Heart right ventricle (tissue), 16 donors: ENCODE measurements at regions of chr21 and their contacts with region 1.

Region 1: DNA sequence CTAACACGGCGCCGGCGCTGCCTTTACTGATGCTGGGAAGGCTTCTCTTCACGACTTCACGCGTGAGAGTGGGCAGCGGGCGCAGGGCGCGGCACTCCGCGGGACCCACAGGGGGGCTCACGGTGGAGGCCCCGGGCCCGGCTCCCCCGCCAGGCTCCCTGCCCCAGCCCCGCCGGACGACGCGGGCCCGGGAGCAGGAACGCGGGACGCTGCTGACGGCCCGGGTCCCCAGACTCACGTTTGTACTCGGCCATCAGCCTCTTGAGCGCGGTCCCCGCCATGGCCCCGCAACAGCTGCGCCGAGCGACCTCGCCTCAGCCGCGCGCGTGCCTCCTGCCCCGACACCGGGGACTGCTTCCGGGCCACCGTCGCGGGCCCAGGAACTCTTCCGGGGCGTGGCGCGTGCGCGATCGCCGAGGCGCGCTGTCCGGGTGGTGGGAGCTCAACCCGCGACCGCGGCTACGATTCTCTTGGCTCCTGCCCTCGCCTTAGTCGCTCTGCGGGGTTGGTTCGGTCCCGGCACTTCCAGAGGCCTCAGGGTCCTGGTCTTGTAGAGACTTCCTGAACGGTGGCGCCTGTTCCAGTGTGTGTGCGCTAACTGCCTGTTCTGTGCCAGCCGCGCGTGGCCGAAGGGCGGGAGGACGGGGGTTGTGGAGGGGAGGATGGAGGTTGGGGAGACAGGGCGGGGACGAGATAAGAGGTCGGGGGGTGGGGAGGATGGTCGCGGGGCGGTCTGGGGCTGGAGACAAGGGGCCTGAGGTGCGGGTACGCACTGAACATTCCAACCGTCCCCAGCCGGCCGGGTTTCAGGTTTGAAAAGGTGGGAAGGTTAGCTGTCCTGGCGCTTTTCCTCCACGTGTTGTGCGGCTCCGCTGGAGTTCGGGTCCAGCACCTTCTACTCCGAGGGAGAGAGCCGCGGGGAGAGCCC is at the start of gene UBE2G2:
- DNase-seq: peak; percentile 77 to 87
- ATAC-seq: peak; percentile 96 to 98 (median 97)
- H3K4me3 ChIP-seq: peak within 1 kb of the TSS; percentile 69 to 98 (median 85)
- H3K27ac ChIP-seq: peak within 1 kb of the TSS in 9 of 10 donors; percentile 61 to 86 (median 79)
- H3K4me1 ChIP-seq: peaks cover 3 to 46% (median 30%) of the 10 kb centered on the region in 9 donors
- H3K27me3 ChIP-seq: no peaks in the 10 kb centered on the region
- CTCF ChIP-seq: no peak
- total RNA-seq, gene UBE2G2: 58.1 to 89.5 (median 67.0) TPM

Region 2: DNA sequence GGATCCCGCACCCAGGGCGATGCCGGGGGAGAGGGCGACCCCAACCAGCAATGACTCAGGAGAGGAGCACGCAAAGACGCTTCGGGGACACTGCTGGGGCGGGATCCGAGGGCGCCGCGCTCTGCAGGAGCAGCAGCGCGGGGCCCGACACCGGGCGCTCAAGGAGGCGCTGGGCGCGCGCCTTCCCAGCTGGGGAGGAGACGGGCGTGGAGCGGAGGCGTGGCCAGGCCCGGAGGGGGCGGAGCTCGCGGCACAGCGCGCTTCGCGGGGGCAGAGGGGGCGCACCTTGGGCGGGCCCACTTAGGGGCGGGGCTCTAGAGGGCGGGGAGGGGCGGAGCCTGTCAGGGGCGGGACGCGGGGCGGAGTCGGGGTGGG is 15.8 kb after region 1 on chr21:
- intact Hi-C with region 1: loop called in 1 of 10 experiments (anchors 2 kb)
- DNase-seq: peak; percentile 92 to 96
- ATAC-seq: peak; percentile 91 to 97 (median 95)
- H3K4me3 ChIP-seq: peak overlapping the region; percentile 52 to 97 (median 82)
- H3K27ac ChIP-seq: peak overlapping the region; percentile 37 to 99 (median 96)
- H3K4me1 ChIP-seq: peaks cover 9 to 44% (median 25%) of the 10 kb centered on the region in 9 donors
- H3K27me3 ChIP-seq: no peaks in the 10 kb centered on the region
- CTCF ChIP-seq: peak in 1 of 9 donors; percentile 13

Region 3: DNA sequence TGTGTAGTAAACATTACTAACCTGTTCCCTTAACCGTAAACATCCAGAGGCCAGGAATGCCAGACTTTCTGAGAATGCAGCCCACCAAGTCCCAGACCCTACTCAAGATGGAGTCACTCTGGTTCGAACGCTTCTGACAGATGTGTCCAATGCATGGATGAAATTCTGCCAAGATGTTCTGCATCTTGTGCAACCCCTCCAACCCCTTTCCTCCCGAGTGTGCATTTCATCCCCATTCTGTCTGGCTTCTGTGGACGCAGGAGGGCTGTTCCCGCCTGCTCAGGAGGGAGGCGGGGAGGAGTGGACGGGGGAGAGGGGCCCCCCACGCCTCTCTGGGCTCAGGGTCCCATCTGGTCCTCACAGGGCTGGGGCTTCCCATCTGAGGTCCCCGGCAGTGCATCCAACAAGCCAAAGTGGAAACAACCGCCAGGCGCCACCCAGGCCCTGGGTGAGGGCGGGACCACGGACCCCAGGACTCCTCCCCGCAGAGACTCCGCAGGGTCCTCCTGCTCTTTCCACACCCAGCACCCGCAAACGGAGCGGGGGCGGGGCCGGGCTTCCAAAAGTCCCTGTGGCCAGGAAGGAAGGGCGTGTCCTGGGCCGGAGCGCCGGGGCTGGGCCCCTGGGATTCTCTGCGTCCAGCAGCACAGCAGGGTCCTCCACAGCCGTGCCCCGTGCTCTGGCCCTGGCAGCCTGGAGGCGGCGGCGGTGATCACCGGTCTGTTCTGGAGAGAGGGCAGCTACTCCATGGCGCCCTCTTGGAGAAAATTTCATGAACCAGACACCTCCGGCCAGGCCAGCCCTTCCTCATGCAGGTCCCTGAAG is 43.9 kb after region 1 on chr21:
- intact Hi-C with region 1: loop called in 1 of 10 experiments (anchors 5 kb)
- DNase-seq: peak; percentile 67 to 81
- ATAC-seq: peak; percentile 72 to 87 (median 80)
- H3K4me3 ChIP-seq: peak overlapping the region in 9 of 10 donors; percentile 5 to 52 (median 45)
- H3K27ac ChIP-seq: peak overlapping the region in 7 of 10 donors; percentile 4 to 71 (median 55)
- H3K4me1 ChIP-seq: peaks cover 15 to 46% (median 26%) of the 10 kb centered on the region in 9 donors
- H3K27me3 ChIP-seq: no peaks in the 10 kb centered on the region
- CTCF ChIP-seq: peak in 5 of 9 donors; percentile 36 to 57 (median 52)

Region 4: GRCh38 chr21:44932408-44933181 is 130.9 kb after region 1 on chr21:
- intact Hi-C with region 1: loop called in 7 of 10 experiments (anchors 5 to 10 kb)
- DNase-seq: peak in 1 of 2 donors; percentile 65
- ATAC-seq: peak; percentile 34 to 72 (median 54)
- H3K4me3 ChIP-seq: peak overlapping the region; percentile 23 to 60 (median 46)
- H3K27ac ChIP-seq: peak overlapping the region in 3 of 10 donors; percentile 15 to 96 (median 26)
- H3K4me1 ChIP-seq: peaks cover 12 to 55% (median 25%) of the 10 kb centered on the region in 9 donors
- H3K27me3 ChIP-seq: peaks cover 13 to 71% (median 40%) of the 10 kb centered on the region in 7 donors
- CTCF ChIP-seq: peak; percentile 36 to 76 (median 62)

Region 5: DNA sequence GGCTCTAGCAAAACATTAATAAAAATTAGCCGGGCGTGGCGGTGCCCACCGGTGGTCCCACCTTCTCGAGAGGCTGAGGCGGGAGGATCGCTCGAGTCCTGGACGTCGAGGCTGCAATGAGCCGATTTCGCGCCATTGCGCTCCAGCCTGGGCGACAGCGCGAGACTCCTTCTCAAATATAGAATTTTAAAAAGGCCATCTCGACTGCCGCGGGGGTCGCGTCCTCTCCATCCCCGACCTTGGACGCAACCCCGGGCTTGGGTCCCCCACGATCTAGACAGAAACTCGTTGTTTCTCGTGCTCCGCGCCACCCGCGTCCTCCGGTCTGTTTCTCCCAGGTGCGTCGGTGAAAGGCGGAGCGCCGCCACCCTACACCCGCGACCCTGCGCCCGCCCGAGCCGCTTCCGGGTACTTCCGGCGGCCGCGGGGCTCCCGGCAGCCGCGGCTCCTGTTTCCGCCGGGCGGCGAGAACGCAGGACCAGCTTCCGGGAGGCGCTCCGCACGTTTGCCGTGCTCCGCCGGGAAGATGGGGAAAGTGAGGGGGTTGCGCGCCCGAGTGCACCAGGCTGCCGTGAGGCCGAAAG is 137.9 kb after region 1 on chr21 and contains the start of gene SLX9:
- intact Hi-C with region 1: loop called in 7 of 10 experiments (anchors 5 to 10 kb)
- DNase-seq: peak; percentile 66 to 83
- ATAC-seq: peak; percentile 82 to 95 (median 88)
- H3K4me3 ChIP-seq: peak within 1 kb of the TSS; percentile 75 to 97 (median 87)
- H3K27ac ChIP-seq: peak within 1 kb of the TSS in 9 of 10 donors; percentile 70 to 88 (median 80)
- H3K4me1 ChIP-seq: peaks cover 3 to 41% (median 30%) of the 10 kb centered on the region in 9 donors
- H3K27me3 ChIP-seq: peaks cover 0 to 6% (median 0%) of the 10 kb centered on the region in 7 donors
- CTCF ChIP-seq: peak in 1 of 9 donors; percentile 4
- total RNA-seq, gene SLX9: 42.4 to 67.2 (median 52.6) TPM

Region 6: DNA sequence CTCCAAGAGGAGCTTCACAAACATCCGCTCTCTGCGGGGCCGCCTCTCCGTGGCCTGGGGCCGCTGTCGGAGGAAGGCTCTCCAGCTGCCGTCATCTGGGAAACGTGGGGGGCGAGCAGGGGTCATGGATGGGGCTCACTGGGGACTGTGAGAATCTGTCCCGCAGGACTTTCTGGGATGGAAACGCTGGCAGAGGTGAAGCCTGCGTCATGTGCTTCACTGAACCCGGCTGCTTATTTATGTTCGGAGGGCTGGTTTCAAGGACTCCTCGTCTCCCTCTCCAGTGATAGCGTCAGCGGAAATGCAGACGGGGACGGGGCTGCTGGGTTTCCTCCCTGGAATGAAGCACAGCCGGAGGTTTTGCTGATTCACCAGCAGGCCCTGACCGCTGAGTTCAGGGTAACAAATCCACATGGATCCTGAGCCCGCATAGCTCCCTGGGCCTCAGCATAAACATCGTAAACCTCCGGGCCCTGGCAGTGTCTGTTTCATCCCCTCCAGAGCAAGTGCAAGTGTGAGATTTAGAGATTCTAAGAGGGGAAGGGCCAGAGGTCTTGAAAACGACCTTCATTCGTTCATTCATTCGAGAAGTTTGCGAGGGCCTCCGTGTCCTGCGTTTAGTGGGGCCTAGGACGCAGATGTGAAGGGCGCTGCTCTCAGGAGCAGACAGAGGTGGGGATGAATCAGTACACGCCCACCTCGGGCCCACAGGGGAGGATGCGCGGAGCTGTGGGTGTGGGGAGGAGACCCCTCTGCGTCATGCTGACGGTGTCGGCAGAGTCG is 493.0 kb after region 1 on chr21:
- intact Hi-C with region 1: no loop called
- DNase-seq: peak; percentile 89 to 92
- ATAC-seq: peak; percentile 55 to 87 (median 79)
- H3K4me3 ChIP-seq: peak overlapping the region in 3 of 10 donors; percentile 0 to 21 (median 18)
- H3K27ac ChIP-seq: peak overlapping the region; percentile 84 to 97 (median 94)
- H3K4me1 ChIP-seq: peaks cover 26 to 73% (median 46%) of the 10 kb centered on the region in 9 donors
- H3K27me3 ChIP-seq: no peaks in the 10 kb centered on the region
- CTCF ChIP-seq: no peak